ENCODE measurements at regions of chr12 and their contacts with region 1.

Region 1: DNA sequence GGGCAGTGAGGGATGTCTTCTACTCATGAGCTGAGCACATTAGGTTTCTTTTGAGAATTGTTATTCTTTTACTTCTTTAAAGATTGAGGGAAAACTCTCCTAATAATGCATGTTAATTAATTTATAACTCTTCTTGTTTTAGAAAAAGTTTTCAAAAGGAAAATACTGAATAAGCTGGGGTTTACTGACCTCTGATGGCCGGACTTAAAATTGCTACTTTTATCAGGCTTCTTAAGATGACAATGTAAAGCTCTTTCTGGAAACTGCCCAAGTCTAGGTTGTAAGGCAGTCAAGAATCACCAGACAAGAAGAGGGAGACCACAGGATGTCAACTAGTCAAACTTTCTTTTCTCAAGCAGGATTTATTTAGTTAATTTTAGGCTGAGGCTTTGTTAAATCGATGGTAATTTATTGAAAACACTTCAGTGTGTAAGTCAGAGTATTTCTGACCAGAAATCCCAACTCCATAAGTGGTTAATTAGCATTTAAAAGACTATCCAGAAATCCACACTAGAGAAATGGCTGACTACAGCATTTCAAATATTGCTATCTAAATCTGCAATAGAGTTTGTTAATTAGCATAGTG is 82.1 kb downstream of the AVPR1A start:
- DNase-seq: peak; percentile 72 to 87 (median 83)
- H3K4me3 ChIP-seq: no peak overlapping the region
- H3K27ac ChIP-seq: no peak overlapping the region
- H3K4me1 ChIP-seq: peaks cover 3 to 13% (median 8%) of the 10 kb centered on the region in 4 experiments
- H3K27me3 ChIP-seq: no peaks in the 10 kb centered on the region

Region 2: GRCh38 chr12:62983599-62984022 is 85.3 kb before region 1 on chr12:
- CTCF ChIA-PET with region 1: interaction called, 17 read pairs
- POLR2A ChIA-PET with region 1: no interaction called
- DNase-seq: peak; percentile 58 to 73 (median 63)
- H3K4me3 ChIP-seq: no peak overlapping the region
- H3K27ac ChIP-seq: no peak overlapping the region
- H3K4me1 ChIP-seq: no peaks in the 10 kb centered on the region
- H3K27me3 ChIP-seq: no peaks in the 10 kb centered on the region

Region 3: GRCh38 chr12:63056649-63057048 is 12.3 kb before region 1 on chr12:
- CTCF ChIA-PET with region 1: interaction called, 11 read pairs
- POLR2A ChIA-PET with region 1: no interaction called
- DNase-seq: no peak
- H3K4me3 ChIP-seq: no peak overlapping the region
- H3K27ac ChIP-seq: no peak overlapping the region
- H3K4me1 ChIP-seq: no peaks in the 10 kb centered on the region
- H3K27me3 ChIP-seq: no peaks in the 10 kb centered on the region

Region 4: DNA sequence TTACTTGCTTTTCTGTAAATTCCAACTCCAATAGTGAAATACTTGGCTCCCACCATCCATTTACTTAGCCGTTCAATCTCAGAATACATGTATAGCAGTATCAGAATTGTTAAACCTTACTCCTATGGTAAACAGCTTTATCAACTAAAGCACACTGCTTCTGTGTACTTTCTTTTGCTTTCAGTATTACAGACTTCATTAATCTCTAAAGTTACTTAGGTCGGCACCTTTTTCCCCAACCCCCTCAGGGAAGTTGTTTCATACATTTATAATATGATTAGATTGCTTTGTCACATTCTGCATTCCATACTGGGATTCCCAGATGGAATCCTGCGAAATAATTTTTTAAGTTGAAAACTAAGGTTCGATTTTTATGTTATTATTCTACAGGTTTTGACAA is 69.5 kb after region 1 on chr12:
- CTCF ChIA-PET with region 1: no interaction called
- POLR2A ChIA-PET with region 1: no interaction called
- DNase-seq: no peak
- H3K4me3 ChIP-seq: no peak overlapping the region
- H3K27ac ChIP-seq: no peak overlapping the region
- H3K4me1 ChIP-seq: no peaks in the 10 kb centered on the region
- H3K27me3 ChIP-seq: no peaks in the 10 kb centered on the region